Uterus (tissue), 4 donors: ENCODE measurements at regions of chr7 and their contacts with region 1.

Region 1: DNA sequence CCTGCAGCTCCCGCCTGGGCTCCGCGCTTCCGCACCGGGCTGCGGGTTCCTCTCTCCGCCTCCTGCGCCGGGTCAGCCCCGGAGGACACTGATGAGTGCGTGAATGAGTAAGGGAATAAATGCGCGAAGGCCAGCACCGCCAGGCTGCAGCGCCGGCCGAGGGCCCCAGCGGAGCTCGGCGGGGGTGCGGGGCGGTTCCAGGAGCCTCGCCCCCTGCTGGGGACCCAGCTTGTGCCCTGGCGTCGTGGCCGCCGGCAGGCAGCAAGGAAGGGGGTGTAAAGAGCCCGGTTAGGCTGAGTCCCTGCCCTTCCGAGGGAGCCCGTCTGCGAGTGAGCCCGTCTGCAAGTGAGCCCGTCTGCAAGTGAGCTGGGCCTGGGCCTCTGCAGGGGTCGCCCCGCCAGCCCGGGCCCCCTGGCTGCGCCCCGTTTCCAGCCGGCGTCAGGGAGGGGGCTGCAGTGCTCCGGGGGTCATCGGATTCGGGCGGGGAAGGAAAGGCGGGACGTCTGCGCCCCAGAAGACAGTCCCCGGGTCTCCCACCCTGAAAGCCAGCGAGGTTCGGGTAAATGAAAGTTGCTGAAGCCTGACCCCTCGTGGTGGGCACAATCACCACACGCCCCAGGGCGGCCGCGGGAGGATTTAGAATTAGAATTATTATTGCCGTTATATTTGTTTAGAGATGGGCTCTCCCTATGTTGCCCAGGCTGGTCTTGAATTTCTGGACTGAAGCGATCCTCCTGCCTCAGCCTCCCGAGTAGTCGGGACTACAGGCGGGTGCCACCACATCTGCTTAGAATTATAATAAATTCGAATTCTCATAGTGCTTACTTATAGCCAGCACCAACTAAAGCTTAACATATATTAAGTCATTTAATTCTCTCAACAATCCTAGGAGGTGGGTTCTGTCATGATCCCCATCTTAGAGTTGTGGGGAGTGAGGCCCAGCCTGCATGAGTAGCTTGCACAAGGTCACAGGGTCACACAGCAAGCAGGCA is 8.6 kb upstream of the CRYGN start:
- DNase-seq: peak; percentile 76 to 78
- H3K4me3 ChIP-seq: peak overlapping the region; percentile 37 to 45
- H3K27ac ChIP-seq: peak overlapping the region; percentile 33 to 57
- H3K4me1 ChIP-seq: no peaks in the 10 kb centered on the region
- H3K27me3 ChIP-seq: no peaks in the 10 kb centered on the region
- CTCF ChIP-seq: peak; percentile 80 to 88 (median 84)
- POLR2A ChIP-seq: no peak

Region 2: GRCh38 chr7:151368136-151368571 is 80.4 kb before region 1 on chr7:
- intact Hi-C with region 1: loop called (anchors 5 kb)
- DNase-seq: peak; percentile 86 to 88
- H3K4me3 ChIP-seq: no peak overlapping the region
- H3K27ac ChIP-seq: peak overlapping the region; percentile 23 to 48
- H3K4me1 ChIP-seq: no peaks in the 10 kb centered on the region
- H3K27me3 ChIP-seq: no peaks in the 10 kb centered on the region
- CTCF ChIP-seq: peak; percentile 93 to 96 (median 95)
- POLR2A ChIP-seq: no peak

Region 3: DNA sequence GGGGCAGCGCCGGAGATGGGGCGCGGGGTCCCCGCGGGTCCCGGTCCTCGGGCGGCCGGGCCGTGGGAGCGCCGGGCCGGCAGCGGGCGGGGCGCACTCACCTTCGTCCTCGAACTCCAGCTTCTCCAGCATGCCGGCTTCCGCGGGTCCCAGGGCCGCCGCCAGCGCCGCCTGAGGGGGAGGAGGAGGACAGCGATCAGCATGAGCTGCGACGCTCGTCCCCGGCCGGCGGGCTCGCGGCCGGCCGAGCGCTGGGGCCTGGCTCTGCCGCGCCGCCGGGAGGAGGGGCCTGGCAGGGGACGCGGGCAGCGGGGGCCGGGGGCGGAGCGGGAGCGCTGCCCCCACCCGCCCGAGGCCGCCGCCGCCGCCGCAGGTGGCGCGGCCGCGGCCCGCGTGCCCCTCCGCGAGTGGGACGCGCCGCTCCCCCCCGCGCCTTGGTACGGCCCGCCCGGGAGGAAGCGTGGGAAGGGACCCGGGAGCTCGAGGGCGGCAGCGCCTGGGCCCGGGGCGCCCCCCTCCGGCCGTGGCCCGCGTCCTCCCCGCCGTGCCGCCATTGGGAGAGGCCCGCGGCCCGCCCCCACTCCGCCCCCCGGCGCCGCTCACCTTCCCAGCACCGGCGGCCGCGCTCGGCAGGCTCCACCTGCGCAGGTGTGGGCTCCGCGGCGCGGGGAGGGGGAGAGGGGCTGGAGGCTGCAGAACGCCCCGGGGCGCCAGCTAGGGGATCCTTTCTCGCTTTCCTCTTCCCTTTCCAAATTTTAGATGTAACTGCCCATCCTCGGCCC is 183.6 kb after region 1 on chr7:
- intact Hi-C with region 1: no loop called
- DNase-seq: peak; percentile 71 to 86
- H3K4me3 ChIP-seq: peak overlapping the region; percentile 53 to 69
- H3K27ac ChIP-seq: peak overlapping the region; percentile 89 to 91
- H3K4me1 ChIP-seq: no peaks in the 10 kb centered on the region
- H3K27me3 ChIP-seq: no peaks in the 10 kb centered on the region
- CTCF ChIP-seq: peak in 3 of 4 experiments; percentile 43 to 61 (median 57)
- POLR2A ChIP-seq: peak; percentile 3 to 55

Region 4: GRCh38 chr7:152176797-152177196 is 728.2 kb after region 1 on chr7:
- intact Hi-C with region 1: no loop called
- DNase-seq: no peak
- H3K4me3 ChIP-seq: no peak overlapping the region
- H3K27ac ChIP-seq: no peak overlapping the region
- H3K4me1 ChIP-seq: no peaks in the 10 kb centered on the region
- H3K27me3 ChIP-seq: no peaks in the 10 kb centered on the region
- CTCF ChIP-seq: no peak
- POLR2A ChIP-seq: no peak